Naive thymus-derived CD4-positive, alpha-beta T cell (primary cell): ENCODE measurements at regions of chr16 and their contacts with region 1.

Region 1: GRCh38 chr16:88561485-88562369 is 8.5 kb upstream of the ZC3H18 start:
- DNase-seq: peak; percentile 27 to 58 (median 49)
- ATAC-seq: peak; percentile 92
- H3K4me3 ChIP-seq: no peak overlapping the region
- H3K4me3 Mint-ChIP-seq: no peak overlapping the region
- H3K27ac ChIP-seq: no peak overlapping the region
- H3K27ac Mint-ChIP-seq: peak overlapping the region in 2 of 9 donors; percentile 54 to 55
- H3K4me1 ChIP-seq: peaks cover 4% of the 10 kb centered on the region in 2 donors
- H3K4me1 Mint-ChIP-seq: peaks cover 0 to 4% (median 3%) of the 10 kb centered on the region in 7 donors
- H3K27me3 ChIP-seq: no peaks in the 10 kb centered on the region
- H3K27me3 Mint-ChIP-seq: peaks cover 0 to 18% (median 4%) of the 10 kb centered on the region in 5 donors

Region 2: GRCh38 chr16:88505405-88506082 is 56.2 kb before region 1 on chr16:
- CTCF ChIA-PET with region 1: no interaction called
- POLR2A ChIA-PET with region 1: no interaction called
- intact Hi-C with region 1: no loop called
- DNase-seq: peak; percentile 46 to 83 (median 75)
- ATAC-seq: peak; percentile 85
- H3K4me3 ChIP-seq: no peak overlapping the region
- H3K4me3 Mint-ChIP-seq: no peak overlapping the region
- H3K27ac ChIP-seq: peak overlapping the region; percentile 14
- H3K27ac Mint-ChIP-seq: peak overlapping the region in 3 of 9 donors; percentile 45 to 85 (median 46)
- H3K4me1 ChIP-seq: peaks cover 0 to 3% of the 10 kb centered on the region in 2 donors
- H3K4me1 Mint-ChIP-seq: peaks cover 0 to 18% (median 6%) of the 10 kb centered on the region in 7 donors
- H3K27me3 ChIP-seq: no peaks in the 10 kb centered on the region
- H3K27me3 Mint-ChIP-seq: no peaks in the 10 kb centered on the region

Region 3: GRCh38 chr16:88527186-88527936 is 34.4 kb before region 1 on chr16:
- CTCF ChIA-PET with region 1: no interaction called
- POLR2A ChIA-PET with region 1: no interaction called
- intact Hi-C with region 1: loop called in 1 of 2 experiments (anchors 1 kb)
- DNase-seq: peak in 8 of 9 donors; percentile 49 to 78 (median 62)
- ATAC-seq: peak; percentile 75
- H3K4me3 ChIP-seq: no peak overlapping the region
- H3K4me3 Mint-ChIP-seq: no peak overlapping the region
- H3K27ac ChIP-seq: no peak overlapping the region
- H3K27ac Mint-ChIP-seq: no peak overlapping the region
- H3K4me1 ChIP-seq: peaks cover 0 to 7% of the 10 kb centered on the region in 2 donors
- H3K4me1 Mint-ChIP-seq: peaks cover 0 to 13% (median 5%) of the 10 kb centered on the region in 7 donors
- H3K27me3 ChIP-seq: no peaks in the 10 kb centered on the region
- H3K27me3 Mint-ChIP-seq: no peaks in the 10 kb centered on the region